ENCODE measurements at regions of chr6 and their contacts with region 1.

Region 1: GRCh38 chr6:27472617-27473400 is at the start of gene ZNF184:
- DNase-seq: peak; percentile 95 to 96
- ATAC-seq: peak; percentile 99 to 100 (median 100)
- H3K4me3 ChIP-seq: peak within 1 kb of the TSS; percentile 51 to 97 (median 80)
- H3K27ac ChIP-seq: peak within 1 kb of the TSS in 9 of 10 donors; percentile 81 to 93 (median 90)
- H3K4me1 ChIP-seq: peaks cover under 1 to 31% (median 17%) of the 10 kb centered on the region in 9 donors
- H3K27me3 ChIP-seq: no peaks in the 10 kb centered on the region
- CTCF ChIP-seq: peak in 3 of 9 donors; percentile 7 to 30 (median 17)
- total RNA-seq, gene ZNF184: 2.1 to 5.5 (median 3.4) TPM

Region 2: GRCh38 chr6:26183581-26184366 is 1289.0 kb before region 1 on chr6:
- intact Hi-C with region 1: loop called in 1 of 10 experiments (anchors 10 kb)
- DNase-seq: peak; percentile 58 to 63
- ATAC-seq: peak; percentile 88 to 97 (median 94)
- H3K4me3 ChIP-seq: peak overlapping the region in 9 of 10 donors; percentile 42 to 82 (median 59)
- H3K27ac ChIP-seq: peak overlapping the region in 9 of 10 donors; percentile 61 to 90 (median 77)
- H3K4me1 ChIP-seq: peaks cover 0 to 31% (median 16%) of the 10 kb centered on the region in 9 donors
- H3K27me3 ChIP-seq: peaks cover 0 to 14% (median 0%) of the 10 kb centered on the region in 7 donors
- CTCF ChIP-seq: no peak

Region 3: GRCh38 chr6:27132532-27133280 is 340.1 kb before region 1 on chr6:
- intact Hi-C with region 1: loop called in 2 of 10 experiments (anchors 10 kb)
- DNase-seq: peak; percentile 72 to 91
- ATAC-seq: peak; percentile 95 to 97 (median 96)
- H3K4me3 ChIP-seq: peak overlapping the region; percentile 31 to 67 (median 64)
- H3K27ac ChIP-seq: peak overlapping the region; percentile 11 to 90 (median 79)
- H3K4me1 ChIP-seq: peaks cover 0 to 42% (median 14%) of the 10 kb centered on the region in 9 donors
- H3K27me3 ChIP-seq: no peaks in the 10 kb centered on the region
- CTCF ChIP-seq: peak in 1 of 9 donors; percentile 6

Region 4: GRCh38 chr6:27188885-27189418 is 283.9 kb before region 1 on chr6:
- intact Hi-C with region 1: loop called in 2 of 10 experiments (anchors 5 to 10 kb)
- DNase-seq: peak in 1 of 2 donors; percentile 59
- ATAC-seq: peak; percentile 88 to 97 (median 93)
- H3K4me3 ChIP-seq: peak overlapping the region; percentile 38 to 73 (median 64)
- H3K27ac ChIP-seq: peak overlapping the region in 9 of 10 donors; percentile 49 to 80 (median 63)
- H3K4me1 ChIP-seq: peaks cover 0 to 12% (median 4%) of the 10 kb centered on the region in 9 donors
- H3K27me3 ChIP-seq: peaks cover 0 to 10% (median 0%) of the 10 kb centered on the region in 7 donors
- CTCF ChIP-seq: peak; percentile 70 to 87 (median 79)

Region 5: DNA sequence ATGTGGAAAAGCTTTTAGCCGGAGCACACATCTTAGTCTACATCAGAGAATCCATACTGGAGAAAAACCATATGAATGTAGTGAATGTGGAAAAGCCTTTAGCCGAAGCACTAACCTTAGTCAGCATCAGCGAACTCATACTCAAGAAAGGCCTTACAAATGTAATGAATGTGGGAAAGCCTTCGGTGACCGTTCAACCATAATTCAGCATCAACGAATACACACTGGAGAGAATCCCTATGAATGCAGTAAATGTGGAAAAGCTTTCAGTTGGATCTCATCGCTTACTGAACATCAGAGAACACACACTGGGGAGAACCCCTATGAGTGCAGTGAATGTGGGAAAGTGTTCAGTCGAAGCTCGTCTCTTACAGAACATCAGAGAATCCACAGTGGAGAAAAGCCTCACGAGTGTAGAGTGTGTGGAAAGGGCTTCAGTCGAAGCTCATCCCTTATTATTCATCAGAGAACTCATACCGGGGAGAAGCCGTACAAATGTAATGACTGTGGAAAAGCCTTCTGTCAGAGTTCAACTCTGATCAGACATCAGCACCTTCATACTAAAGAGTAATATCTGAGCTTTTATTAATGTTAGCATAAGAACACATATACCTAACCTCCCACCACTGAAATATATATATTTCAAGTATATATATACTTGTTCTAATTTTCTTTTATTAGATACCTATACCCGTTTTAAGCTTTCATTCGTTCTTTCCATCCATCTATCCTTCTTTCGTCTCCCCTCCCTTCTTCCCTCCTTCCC is 71.7 kb before region 1 on chr6:
- intact Hi-C with region 1: no loop called
- DNase-seq: no peak
- ATAC-seq: no peak
- H3K4me3 ChIP-seq: no peak overlapping the region
- H3K27ac ChIP-seq: no peak overlapping the region
- H3K4me1 ChIP-seq: no peaks in the 10 kb centered on the region
- H3K27me3 ChIP-seq: no peaks in the 10 kb centered on the region
- CTCF ChIP-seq: no peak

Region 6: DNA sequence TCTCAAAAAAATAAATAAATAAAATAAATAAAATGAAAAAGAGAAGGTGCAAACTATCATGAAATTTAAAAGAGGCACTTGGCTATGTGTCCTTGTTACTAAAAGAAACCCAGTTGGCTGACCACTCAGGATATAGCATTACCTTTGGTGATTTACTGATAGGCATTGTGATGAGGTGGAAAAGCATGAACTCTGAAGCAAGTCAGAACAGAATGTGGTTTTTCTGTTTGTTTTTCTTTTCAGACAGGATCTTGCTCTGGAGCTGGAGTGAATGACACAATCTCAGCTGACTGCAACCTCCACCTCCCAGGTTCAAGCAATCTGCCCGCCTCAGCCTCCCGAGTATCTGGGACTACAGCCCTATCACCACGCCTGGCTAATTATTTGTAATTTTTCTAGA is 31.8 kb before region 1 on chr6:
- intact Hi-C with region 1: no loop called
- DNase-seq: no peak
- ATAC-seq: no peak
- H3K4me3 ChIP-seq: no peak overlapping the region
- H3K27ac ChIP-seq: no peak overlapping the region
- H3K4me1 ChIP-seq: no peaks in the 10 kb centered on the region
- H3K27me3 ChIP-seq: no peaks in the 10 kb centered on the region
- CTCF ChIP-seq: no peak

Region 7: DNA sequence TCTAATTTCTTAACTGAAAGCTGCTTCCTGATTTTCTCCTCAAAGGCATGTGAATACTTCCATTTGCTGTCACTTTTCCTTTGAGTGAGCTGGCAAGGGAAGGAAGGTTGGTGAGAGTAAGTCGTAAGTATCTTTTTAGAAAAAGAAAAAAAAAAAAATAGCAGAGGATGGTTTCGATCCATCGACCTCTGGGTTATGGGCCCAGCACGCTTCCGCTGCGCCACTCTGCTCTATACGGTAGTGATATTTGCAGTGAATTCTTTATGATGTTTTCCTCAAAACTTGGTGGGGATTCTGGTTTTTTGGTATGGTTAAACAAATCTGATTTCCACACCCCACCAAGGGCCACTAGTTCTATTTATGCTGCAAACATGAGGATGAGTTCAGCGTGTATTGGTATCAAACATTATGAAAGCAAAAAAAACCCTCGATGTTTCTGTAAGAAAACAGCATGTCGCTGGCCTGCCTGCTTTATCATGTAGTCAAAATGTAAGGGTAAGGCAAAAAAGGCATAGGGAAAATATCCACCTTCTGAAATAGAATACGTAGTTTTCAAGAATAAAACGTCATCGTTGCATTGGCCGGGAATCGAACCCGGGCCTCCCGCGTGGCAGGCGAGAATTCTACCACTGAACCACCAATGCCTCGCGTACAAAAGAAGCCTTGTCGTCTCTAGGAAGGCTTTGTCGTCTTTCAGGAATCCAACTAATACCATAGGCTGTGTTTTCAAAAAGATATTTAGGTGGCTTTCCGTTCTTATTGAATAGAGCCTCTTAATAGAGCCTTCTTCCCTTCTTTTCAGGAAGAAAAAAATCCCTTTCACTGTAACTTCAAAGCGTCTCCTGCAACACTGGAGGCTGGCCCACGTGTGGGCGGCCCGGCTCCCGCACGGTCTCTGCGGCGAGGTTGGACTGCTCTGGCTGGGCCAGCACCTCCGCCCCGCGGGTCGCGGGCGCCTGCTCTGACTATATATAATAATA is 429.8 kb after region 1 on chr6:
- intact Hi-C with region 1: loop called in 5 of 10 experiments (anchors 10 kb)
- DNase-seq: peak; percentile 76 to 90
- ATAC-seq: peak; percentile 93 to 99 (median 96)
- H3K4me3 ChIP-seq: peak overlapping the region; percentile 31 to 64 (median 58)
- H3K27ac ChIP-seq: peak overlapping the region in 9 of 10 donors; percentile 12 to 79 (median 68)
- H3K4me1 ChIP-seq: peaks cover 0 to 13% (median 0%) of the 10 kb centered on the region in 9 donors
- H3K27me3 ChIP-seq: peaks cover 0 to 4% (median 0%) of the 10 kb centered on the region in 7 donors
- CTCF ChIP-seq: no peak